Prostate gland (tissue), 2 donors: ENCODE measurements at regions of chr18 and their contacts with region 1.

Region 1: DNA sequence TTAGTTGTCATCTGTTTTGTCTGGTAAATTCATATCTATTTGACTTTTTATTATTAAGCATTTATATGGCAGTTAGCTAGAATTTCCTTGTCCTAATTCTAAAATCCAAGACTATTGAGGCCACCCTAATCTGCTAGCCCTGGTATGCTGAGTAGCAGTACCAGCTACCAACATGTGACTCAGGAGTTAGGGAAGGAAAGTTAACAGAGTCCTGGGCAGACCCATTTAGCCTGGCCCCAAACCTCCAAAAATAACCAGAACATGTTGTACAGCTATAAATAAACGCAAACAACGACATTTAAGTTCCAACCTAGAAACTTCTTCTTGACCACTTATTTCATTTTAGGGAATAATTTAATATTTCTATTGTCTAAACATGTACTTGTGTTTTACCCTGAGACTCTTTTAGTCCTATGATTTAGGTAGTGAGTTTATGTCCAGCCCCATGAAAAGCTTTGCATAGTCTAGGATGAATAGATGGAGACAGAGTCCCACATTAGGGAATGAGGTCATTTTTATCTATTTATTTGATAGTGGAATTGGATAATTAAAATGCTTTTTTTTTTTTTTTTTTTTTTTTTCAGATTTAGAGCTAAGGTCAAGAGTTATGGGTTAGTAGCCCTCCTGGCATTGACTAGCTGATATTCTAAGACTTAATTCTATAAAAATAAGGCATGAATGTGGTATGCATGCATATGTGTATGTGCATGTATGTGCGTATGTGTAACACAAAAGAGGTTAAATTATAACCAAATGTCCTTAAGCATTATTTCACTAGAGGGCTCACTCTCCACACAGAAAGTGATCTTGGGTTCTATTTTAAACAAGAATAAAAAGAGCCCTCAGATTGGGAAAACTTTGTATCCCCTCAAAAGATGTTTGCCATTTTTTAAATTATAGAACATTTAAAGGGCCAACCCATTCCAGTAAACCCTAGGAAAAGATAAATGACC is 160.1 kb upstream of the MAPRE2 start:
- DNase-seq: no peak
- H3K4me3 ChIP-seq: no peak overlapping the region
- H3K27ac ChIP-seq: peak overlapping the region in 1 of 2 donors; percentile 18
- H3K4me1 ChIP-seq: no peaks in the 10 kb centered on the region
- H3K27me3 ChIP-seq: no peaks in the 10 kb centered on the region
- CTCF ChIP-seq: no peak
- POLR2A ChIP-seq: no peak

Region 2: DNA sequence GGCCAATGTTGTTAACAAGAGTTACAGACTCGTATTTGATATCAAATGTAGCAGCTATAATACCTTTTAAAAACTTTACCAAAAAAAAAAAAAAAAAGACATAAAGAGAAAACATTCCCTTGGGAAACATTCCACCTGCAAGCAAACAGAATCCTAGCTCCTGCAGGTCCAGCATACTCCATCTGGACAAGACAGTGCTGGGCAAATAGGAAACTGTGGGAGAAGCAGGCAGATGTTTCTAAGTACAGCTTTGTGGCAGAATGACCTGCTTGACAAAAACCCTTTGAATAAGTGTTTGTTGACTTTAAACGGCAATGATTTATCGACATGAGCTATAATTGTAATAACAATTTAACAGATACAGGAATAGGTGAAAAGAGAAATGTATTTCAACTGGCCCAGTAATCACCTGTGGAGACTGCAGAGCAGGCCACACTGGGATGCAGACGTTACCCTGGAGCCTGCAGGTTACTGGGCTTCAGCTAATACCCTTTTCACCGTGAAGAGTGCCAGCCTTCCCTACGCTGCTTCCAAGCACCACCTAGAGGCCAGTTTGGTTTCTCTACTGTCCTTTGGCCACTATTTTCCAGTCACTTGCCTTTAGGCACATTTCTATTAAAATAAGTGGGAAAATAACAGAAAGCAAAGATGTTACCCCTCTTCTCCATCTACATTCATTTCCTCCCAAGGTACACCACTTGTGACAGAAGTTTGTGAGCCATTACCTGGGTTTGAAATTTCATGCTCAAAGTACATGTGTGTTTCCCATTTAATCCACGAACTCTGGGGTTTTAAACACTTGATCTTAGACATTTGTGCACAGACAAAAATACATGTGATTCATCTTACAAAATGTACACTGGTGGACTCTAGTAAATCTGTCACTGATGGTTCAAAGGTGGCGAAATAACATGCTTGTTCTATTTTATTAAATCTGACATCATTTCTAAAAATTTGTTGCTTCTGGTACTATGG is 262.8 kb after region 1 on chr18:
- intact Hi-C with region 1: loop called (anchors 10 kb)
- DNase-seq: peak; percentile 38
- H3K4me3 ChIP-seq: no peak overlapping the region
- H3K27ac ChIP-seq: no peak overlapping the region
- H3K4me1 ChIP-seq: no peaks in the 10 kb centered on the region
- H3K27me3 ChIP-seq: no peaks in the 10 kb centered on the region
- CTCF ChIP-seq: peak in 3 of 4 experiments; percentile 52 to 71 (median 69)
- POLR2A ChIP-seq: no peak